CD4-positive, alpha-beta memory T cell (primary cell): ENCODE measurements at regions of chr16 and their contacts with region 1.

Region 1: DNA sequence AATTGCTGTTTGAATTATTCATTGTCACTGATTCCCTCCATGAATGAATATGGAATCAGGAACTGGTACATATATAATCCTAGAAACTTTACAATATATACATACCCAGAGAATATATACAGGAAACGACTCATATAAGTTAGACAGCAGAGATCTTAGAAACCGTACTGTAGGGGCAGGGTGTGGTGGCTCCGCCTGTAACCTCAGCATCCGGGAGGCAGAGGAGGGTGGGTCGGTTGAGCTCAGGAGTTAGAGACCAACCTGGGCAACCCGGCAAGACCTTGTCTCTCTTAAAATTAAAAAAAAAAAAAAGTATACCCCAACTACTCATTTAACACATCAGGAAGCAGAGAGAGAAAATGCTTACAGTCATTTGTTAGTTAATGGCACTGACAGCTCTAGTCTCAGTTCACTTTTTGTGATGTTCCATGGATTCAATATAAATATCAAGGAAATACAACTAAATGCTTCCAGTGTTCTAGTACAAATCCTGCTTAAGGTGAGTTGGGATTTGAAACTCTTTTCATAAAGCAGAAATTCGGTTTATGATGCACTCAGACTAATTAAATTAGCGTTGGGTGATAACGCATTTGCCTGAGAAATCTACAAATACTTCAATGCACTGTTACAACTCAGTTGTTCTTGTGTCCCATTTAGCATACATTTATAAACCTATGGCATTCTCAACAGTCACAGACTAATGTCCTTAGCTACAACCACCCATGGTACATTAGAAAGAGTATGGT is 5.6 kb downstream of the GLG1 start:
- DNase-seq: peak; percentile 72 to 87 (median 77)
- H3K4me3 ChIP-seq: peak overlapping the region in 1 of 2 donors; percentile 11
- H3K4me3 Mint-ChIP-seq: peak overlapping the region; percentile 74 to 90 (median 82)
- H3K27ac ChIP-seq: peak overlapping the region; percentile 58
- H3K27ac Mint-ChIP-seq: peak overlapping the region; percentile 83 to 99 (median 96)
- H3K4me1 ChIP-seq: peaks cover 86% of the 10 kb centered on the region
- H3K4me1 Mint-ChIP-seq: peaks cover 47 to 82% (median 65%) of the 10 kb centered on the region in 4 donors
- H3K27me3 ChIP-seq: no peaks in the 10 kb centered on the region
- H3K27me3 Mint-ChIP-seq: no peaks in the 10 kb centered on the region

Region 2: GRCh38 chr16:74568961-74569631 is 32.2 kb before region 1 on chr16:
- CTCF ChIA-PET with region 1: no interaction called
- POLR2A ChIA-PET with region 1: interaction called, 9 read pairs
- intact Hi-C with region 1: loop called (anchors 5 kb)
- DNase-seq: no peak
- H3K4me3 ChIP-seq: no peak overlapping the region
- H3K4me3 Mint-ChIP-seq: no peak overlapping the region
- H3K27ac ChIP-seq: no peak overlapping the region
- H3K27ac Mint-ChIP-seq: peak overlapping the region in 5 of 7 donors; percentile 18 to 91 (median 48)
- H3K4me1 ChIP-seq: peaks cover 95% of the 10 kb centered on the region
- H3K4me1 Mint-ChIP-seq: peaks cover 58 to 92% (median 75%) of the 10 kb centered on the region in 4 donors
- H3K27me3 ChIP-seq: no peaks in the 10 kb centered on the region
- H3K27me3 Mint-ChIP-seq: no peaks in the 10 kb centered on the region

Region 3: DNA sequence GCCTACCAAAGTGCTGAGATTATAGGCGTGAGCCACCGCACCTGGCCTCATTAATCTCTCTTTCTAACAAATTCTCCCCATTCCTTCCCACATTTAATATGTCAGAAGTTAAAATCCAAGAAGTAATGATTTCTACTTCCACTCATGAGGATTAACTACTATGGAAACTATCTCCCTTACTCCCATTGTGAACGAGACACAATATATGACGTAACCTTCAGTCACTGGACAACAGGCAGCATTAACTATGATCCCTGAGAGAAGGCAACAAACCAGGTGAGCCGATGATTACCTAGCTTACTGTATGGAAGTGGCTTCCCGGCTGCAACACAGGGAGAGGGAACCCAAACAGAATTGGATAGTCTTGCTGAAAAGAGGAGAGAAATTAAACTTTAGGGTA is 14.4 kb before region 1 on chr16:
- CTCF ChIA-PET with region 1: interaction called, 5 read pairs
- POLR2A ChIA-PET with region 1: interaction called, 10 read pairs
- intact Hi-C with region 1: loop called (anchors 2 kb)
- DNase-seq: no peak
- H3K4me3 ChIP-seq: no peak overlapping the region
- H3K4me3 Mint-ChIP-seq: peak overlapping the region in 5 of 8 donors; percentile 9 to 58 (median 35)
- H3K27ac ChIP-seq: no peak overlapping the region
- H3K27ac Mint-ChIP-seq: peak overlapping the region in 5 of 7 donors; percentile 3 to 67 (median 29)
- H3K4me1 ChIP-seq: peaks cover 67% of the 10 kb centered on the region
- H3K4me1 Mint-ChIP-seq: peaks cover 35 to 91% (median 60%) of the 10 kb centered on the region in 4 donors
- H3K27me3 ChIP-seq: no peaks in the 10 kb centered on the region
- H3K27me3 Mint-ChIP-seq: no peaks in the 10 kb centered on the region